Cardiac septum (tissue), 1 donor: ENCODE measurements at regions of chr1 and their contacts with region 1.

Region 1: DNA sequence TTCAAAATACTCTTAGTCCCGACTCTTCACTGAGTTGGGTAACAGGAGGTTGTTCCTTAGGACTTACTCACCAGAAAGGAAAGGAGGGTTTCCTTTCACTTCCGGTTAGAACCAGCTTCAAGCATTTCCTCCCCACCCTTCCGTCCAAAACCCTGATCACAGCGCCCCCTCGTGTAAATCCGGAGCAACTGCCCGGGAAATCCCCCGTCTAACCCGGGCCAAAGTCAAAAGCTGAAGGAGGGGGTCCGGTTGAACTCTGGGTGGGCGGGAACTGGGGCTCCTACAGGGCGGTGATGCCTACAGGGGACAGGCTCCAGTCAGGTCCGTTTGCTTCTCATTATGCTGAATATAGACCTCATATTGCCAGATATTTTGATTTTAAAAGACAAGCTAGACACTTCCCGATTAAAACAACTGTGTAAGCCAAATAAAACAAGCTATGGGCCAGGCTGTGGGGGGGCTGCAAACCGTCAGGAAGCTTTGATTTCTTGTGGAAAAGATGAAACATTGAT is 15.0 kb upstream of the MTARC2 start:
- DNase-seq: peak; percentile 91

Region 2: DNA sequence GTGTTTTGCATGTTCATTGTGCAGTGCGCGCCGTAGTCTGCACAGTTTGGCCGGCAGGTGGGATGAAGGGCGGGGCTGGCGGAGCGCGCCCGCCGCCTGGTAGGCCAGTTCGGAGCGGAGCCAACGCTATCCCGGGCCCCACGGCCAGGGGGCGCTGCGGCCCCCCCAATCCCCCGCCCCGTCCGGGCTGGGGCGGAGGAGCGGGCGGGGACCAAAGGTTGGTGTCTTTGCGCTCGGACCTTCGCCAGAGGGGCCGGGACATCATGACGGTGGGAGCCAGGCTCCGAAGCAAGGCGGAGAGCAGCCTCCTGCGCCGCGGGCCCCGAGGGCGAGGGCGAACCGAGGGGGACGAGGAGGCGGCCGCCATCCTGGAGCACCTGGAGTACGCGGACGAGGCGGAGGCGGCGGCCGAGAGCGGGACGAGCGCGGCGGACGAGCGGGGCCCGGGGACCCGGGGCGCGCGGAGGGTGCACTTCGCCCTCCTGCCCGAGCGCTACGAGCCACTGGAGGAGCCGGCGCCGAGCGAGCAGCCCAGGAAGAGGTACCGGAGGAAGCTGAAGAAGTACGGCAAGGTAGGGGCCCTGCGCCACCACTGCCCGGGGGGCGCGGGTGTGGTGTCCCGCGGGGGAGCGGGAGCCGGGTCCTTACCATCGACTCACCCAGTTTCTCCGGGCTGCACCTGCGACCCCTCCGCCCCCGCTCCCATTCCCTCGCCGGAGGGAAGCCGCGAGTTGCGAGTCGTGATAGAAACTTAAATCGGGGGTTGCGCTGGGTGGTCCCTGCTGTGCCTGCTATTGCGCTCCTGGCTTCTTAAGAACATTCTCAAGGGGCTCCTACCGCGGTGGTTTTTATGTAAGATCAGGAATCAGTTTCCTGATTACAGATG is 42.8 kb before region 1 on chr1 and contains the start of gene C1orf115:
- intact Hi-C with region 1: loop called (anchors 2 kb)
- DNase-seq: peak; percentile 88
- total RNA-seq, gene C1orf115: 5.5 TPM

Region 3: DNA sequence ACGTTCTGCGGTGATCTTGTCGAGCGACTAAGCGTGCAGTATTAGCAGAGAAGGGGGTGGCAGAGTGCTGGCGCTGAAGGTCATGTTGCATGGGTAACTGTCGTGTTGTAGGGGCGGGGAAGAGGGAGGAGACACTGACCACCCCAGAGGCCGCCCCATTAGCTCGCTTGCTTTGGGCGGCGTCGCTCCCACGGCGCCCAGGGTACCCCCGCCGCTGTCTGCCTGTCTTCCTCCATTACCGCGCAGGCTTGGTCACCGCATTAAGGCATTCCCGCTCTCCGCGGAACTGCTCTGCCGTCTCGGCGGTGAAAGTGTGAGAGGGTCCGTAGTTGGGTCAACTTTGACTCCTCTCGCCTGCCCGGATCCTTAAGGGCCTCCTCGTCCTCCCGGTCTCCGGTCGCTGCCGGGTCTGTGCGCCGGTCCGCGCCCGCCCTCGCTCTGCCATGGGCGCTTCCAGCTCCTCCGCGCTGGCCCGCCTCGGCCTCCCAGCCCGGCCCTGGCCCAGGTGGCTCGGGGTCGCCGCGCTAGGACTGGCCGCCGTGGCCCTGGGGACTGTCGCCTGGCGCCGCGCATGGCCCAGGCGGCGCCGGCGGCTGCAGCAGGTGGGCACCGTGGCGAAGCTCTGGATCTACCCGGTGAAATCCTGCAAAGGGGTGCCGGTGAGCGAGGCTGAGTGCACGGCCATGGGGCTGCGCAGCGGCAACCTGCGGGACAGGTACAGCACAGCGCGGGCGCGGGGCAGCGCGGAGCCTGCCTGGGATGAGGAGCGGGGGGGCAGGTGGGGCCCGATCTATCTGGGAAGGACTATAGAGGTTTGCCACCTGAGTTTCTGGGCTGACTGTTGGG is 15.2 kb after region 1 on chr1 and contains the start of gene MTARC2:
- intact Hi-C with region 1: loop called (anchors 2 kb)
- DNase-seq: peak; percentile 92
- total RNA-seq, gene MTARC2: 22.1 TPM

Region 4: GRCh38 chr1:220767312-220768125 is 34.4 kb after region 1 on chr1:
- intact Hi-C with region 1: no loop called
- DNase-seq: no peak

Region 5: GRCh38 chr1:220786337-220787068 is 53.4 kb after region 1 on chr1 and contains the start of gene MTARC1:
- intact Hi-C with region 1: loop called (anchors 5 kb)
- DNase-seq: peak; percentile 90
- total RNA-seq, gene MTARC1: 12.8 TPM